Stomach (tissue), 19 donors: ENCODE measurements at regions of chr15 and their contacts with region 1.

Region 1: GRCh38 chr15:65638681-65639089 is 16.9 kb downstream of the SLC24A1 start:
- DNase-seq: peak in 1 of 2 donors; percentile 88
- H3K4me3 ChIP-seq: peak overlapping the region in 1 of 4 donors; percentile 9
- H3K27ac ChIP-seq: no peak overlapping the region
- H3K4me1 ChIP-seq: peaks cover 0 to 18% (median 7%) of the 10 kb centered on the region in 4 donors
- H3K27me3 ChIP-seq: no peaks in the 10 kb centered on the region
- CTCF ChIP-seq: peak in 5 of 7 experiments; percentile 66 to 83 (median 76)
- EP300 ChIP-seq: no peak
- POLR2A ChIP-seq: no peak

Region 2: DNA sequence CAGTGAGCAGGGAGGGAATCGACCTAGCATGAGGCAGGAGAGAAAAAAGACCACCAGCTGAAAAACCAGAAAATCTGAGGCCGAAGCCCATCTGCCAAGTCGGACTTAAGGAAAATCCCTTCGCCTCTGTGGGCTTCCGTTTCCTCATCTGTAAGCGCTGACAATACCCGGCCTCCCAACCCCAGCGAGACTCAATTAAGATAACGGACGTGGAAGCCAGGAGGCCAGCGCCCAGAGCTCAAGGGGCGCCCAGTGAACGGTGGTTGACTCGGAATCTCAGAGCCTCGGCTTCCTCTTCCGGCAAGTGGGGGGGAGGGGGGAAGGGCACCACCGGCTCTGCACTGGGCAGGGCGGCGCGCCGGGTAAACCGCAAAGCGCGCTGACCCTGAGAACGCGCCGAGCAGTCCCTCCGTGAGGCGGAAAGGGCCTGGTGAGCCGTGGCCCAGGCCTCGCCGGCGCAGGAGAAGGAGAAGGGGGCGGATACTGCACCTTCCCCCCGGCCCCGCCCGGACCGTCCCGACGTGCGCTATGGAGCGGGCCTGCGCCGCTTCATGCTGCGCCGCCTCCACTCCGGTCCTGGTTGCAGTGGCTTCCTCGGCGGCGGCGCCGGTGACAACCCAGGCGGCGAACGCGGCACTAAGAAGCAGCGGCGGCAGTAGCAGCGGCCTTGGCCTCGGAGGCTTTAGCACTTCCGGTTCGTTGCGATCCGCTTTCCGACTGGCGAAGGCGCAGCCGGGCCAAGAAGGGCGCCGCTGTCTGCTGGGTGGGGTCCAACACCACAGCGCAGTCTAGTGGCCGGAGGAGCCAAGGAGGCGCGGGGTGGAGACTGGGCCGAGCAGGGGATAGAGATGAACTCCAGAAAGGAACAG is 121.5 kb before region 1 on chr15 and contains the start of gene DPP8:
- intact Hi-C with region 1: no loop called
- DNase-seq: peak; percentile 94 to 98
- H3K4me3 ChIP-seq: peak within 1 kb of the TSS; percentile 95 to 100 (median 98)
- H3K27ac ChIP-seq: peak within 1 kb of the TSS; percentile 85 to 95 (median 92)
- H3K4me1 ChIP-seq: peaks cover 16 to 52% (median 41%) of the 10 kb centered on the region in 4 donors
- H3K27me3 ChIP-seq: no peaks in the 10 kb centered on the region
- CTCF ChIP-seq: peak in 5 of 7 experiments; percentile 2 to 85 (median 81)
- EP300 ChIP-seq: no peak
- POLR2A ChIP-seq: no peak
- total RNA-seq, gene DPP8: 8.8 to 89.0 (median 40.6) TPM

Region 3: DNA sequence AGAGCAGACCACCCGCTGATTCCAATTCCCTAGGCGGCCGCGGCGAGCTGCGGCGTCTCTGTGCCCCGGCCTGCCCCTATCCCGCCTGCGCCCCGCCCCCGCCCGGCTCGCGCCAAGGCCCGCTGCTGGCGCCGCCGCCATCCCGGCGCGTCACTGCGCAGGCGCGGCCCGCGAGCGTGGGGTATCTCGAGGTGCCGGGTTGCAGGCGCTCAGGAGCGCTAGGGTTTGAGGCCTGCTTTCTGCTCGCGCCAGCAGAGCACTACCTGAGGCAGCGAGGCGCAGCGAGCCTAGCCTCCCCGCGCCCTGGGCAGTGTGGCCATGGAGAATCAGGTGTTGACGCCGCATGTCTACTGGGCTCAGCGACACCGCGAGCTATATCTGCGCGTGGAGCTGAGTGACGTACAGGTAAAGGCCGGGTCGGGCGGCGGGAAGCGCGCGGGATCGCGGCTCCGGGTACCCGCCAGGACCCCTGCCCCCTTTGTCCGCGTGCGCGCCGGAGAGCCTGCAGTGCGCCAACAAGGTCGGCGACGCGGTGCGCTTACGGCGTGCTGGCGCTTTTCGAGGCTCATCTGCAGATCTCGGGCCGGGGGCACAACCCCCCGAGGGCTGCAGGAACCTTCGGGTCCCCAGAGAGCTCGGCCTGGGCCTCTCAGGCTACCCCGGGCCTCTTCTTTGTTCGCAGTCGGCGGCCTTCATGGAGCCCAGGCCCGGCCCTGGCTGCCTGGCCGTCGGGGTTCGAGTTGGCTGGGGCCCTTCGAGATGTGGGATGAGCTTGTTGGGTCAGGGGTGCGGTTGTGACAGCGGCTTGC is 108.2 kb before region 1 on chr15 and contains the start of gene HACD3:
- intact Hi-C with region 1: no loop called
- DNase-seq: peak; percentile 90 to 96
- H3K4me3 ChIP-seq: peak within 1 kb of the TSS; percentile 65 to 96 (median 75)
- H3K27ac ChIP-seq: peak within 1 kb of the TSS; percentile 74 to 83 (median 79)
- H3K4me1 ChIP-seq: peaks cover 13 to 55% (median 40%) of the 10 kb centered on the region in 4 donors
- H3K27me3 ChIP-seq: no peaks in the 10 kb centered on the region
- CTCF ChIP-seq: no peak
- EP300 ChIP-seq: no peak
- POLR2A ChIP-seq: no peak
- total RNA-seq, gene HACD3: 7.0 to 128 (median 32.6) TPM

Region 4: DNA sequence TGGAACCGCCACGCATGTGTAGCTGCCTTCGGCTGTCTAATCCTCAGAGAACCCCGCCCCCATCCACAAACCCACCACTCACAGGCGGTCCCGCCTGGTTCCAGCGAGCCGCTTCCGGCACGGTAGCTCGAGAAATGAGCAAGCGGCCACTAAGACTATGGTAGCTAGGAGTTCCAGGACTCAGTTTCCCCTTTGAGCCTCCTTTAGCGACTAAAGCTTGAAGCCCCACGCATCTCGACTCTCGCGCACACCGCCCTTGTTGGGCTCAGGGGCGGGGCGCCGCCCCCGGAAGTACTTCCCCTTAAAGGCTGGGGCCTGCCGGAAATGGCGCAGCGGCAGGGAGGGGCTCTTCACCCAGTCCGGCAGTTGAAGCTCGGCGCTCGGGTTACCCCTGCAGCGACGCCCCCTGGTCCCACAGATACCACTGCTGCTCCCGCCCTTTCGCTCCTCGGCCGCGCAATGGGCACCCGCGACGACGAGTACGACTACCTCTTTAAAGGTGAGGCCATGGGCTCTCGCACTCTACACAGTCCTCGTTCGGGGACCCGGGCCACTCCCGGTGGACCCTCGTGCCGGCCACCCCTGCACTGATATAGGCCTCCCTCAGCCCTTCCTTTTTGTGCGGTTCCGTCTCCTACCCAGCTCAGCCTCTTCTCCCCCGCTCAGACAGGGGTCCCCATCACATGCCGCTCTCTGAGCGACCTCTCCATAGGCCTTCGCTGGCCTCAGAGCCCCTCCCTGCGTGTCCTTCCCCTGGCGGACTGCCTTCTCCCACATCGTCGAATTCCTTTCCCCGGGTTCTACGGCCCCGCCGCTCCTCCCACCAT is 230.7 kb after region 1 on chr15 and contains the start of gene RAB11A:
- intact Hi-C with region 1: loop called (anchors 10 kb)
- DNase-seq: peak; percentile 96 to 99
- H3K4me3 ChIP-seq: peak within 1 kb of the TSS; percentile 74 to 93 (median 82)
- H3K27ac ChIP-seq: peak within 1 kb of the TSS; percentile 95 to 99 (median 97)
- H3K4me1 ChIP-seq: peaks cover 9 to 41% (median 26%) of the 10 kb centered on the region in 4 donors
- H3K27me3 ChIP-seq: no peaks in the 10 kb centered on the region
- CTCF ChIP-seq: peak in 2 of 7 experiments; percentile 18 to 27
- EP300 ChIP-seq: no peak
- POLR2A ChIP-seq: peak in 2 of 4 donors; percentile 75 to 89
- total RNA-seq, gene RAB11A: 133 to 267 (median 172) TPM